CD8-positive, alpha-beta memory T cell (primary cell): ENCODE measurements at regions of chr3 and their contacts with region 1.

Region 1: GRCh38 chr3:153221748-153222162 is 59.7 kb downstream of the RAP2B start:
- DNase-seq: peak; percentile 59 to 90 (median 85)
- H3K4me3 ChIP-seq: peak overlapping the region; percentile 25
- H3K4me3 Mint-ChIP-seq: peak overlapping the region; percentile 5 to 83 (median 76)
- H3K27ac ChIP-seq: peak overlapping the region; percentile 55
- H3K27ac Mint-ChIP-seq: peak overlapping the region; percentile 84 to 100 (median 98)
- H3K4me1 ChIP-seq: peaks cover 61% of the 10 kb centered on the region
- H3K4me1 Mint-ChIP-seq: peaks cover 62 to 73% (median 71%) of the 10 kb centered on the region in 3 donors
- H3K27me3 ChIP-seq: no peaks in the 10 kb centered on the region
- H3K27me3 Mint-ChIP-seq: no peaks in the 10 kb centered on the region

Region 2: GRCh38 chr3:152961323-152961722 is 260.4 kb before region 1 on chr3:
- CTCF ChIA-PET with region 1: no interaction called
- POLR2A ChIA-PET with region 1: no interaction called
- DNase-seq: no peak
- H3K4me3 ChIP-seq: no peak overlapping the region
- H3K4me3 Mint-ChIP-seq: no peak overlapping the region
- H3K27ac ChIP-seq: no peak overlapping the region
- H3K27ac Mint-ChIP-seq: no peak overlapping the region
- H3K4me1 ChIP-seq: no peaks in the 10 kb centered on the region
- H3K4me1 Mint-ChIP-seq: no peaks in the 10 kb centered on the region
- H3K27me3 ChIP-seq: no peaks in the 10 kb centered on the region
- H3K27me3 Mint-ChIP-seq: peaks cover 0 to 5% of the 10 kb centered on the region in 2 donors

Region 3: GRCh38 chr3:153209596-153209995 is 12.2 kb before region 1 on chr3:
- CTCF ChIA-PET with region 1: interaction called, 13 read pairs
- POLR2A ChIA-PET with region 1: interaction called, 3 read pairs
- DNase-seq: no peak
- H3K4me3 ChIP-seq: no peak overlapping the region
- H3K4me3 Mint-ChIP-seq: peak overlapping the region in 3 of 7 donors; percentile 26 to 68 (median 61)
- H3K27ac ChIP-seq: no peak overlapping the region
- H3K27ac Mint-ChIP-seq: peak overlapping the region in 2 of 8 donors; percentile 71 to 84
- H3K4me1 ChIP-seq: peaks cover 18% of the 10 kb centered on the region
- H3K4me1 Mint-ChIP-seq: peaks cover 32 to 52% (median 47%) of the 10 kb centered on the region in 3 donors
- H3K27me3 ChIP-seq: no peaks in the 10 kb centered on the region
- H3K27me3 Mint-ChIP-seq: peaks cover 0 to 2% of the 10 kb centered on the region in 2 donors